ENCODE measurements at regions of chr2 and their contacts with region 1.

Region 1: GRCh38 chr2:44167940-44168680 is 565 bp upstream of the PPM1B start:
- DNase-seq: peak; percentile 97 to 100 (median 98)

Region 2: GRCh38 chr2:44226753-44227152 is 58.6 kb after region 1 on chr2:
- intact Hi-C with region 1: loop called (anchors 10 kb)
- DNase-seq: no peak

Region 3: GRCh38 chr2:44361330-44362206 is 193.5 kb after region 1 on chr2 and contains the starts of genes CAMKMT and PREPL:
- intact Hi-C with region 1: loop called (anchors 5 kb)
- DNase-seq: peak; percentile 94 to 99 (median 98)